Prostate gland (tissue), 2 donors: ENCODE measurements at regions of chr4 and their contacts with region 1.

Region 1: DNA sequence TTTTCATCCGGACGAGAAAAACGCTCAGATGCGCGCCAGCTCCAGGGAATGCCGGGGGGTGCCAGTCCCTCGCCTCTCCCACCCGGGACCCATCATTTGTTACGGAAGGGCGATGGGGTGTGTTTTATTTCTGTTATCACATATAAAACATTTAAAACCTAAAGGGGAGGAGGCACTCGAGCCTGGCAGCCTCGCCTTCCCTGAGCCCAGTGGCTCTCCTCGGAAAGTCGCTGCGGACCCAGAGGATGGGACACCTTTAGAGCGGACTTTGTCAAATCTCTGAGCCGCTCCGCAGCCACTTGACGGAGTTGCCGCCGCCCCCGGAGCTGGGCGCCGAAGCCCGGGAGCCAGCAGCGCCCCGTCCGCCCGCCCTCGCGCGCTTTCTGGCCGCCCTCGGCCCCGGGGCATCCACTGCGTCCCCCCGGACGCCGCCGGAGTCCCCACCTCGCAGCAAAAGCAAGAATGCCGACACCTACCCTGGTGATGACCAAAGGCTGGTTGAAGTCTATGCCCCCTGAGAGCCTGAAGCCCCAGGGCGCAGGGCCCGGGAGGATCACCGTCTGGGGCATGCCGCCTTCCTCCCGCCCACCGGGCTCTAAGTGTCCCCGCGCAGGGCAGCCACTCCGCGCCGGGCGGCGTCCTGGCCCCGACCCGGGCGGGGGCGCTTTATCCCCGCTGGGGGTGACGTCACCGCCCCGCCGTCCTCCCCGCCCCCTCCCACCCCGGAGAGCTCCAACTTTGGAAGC is at the start of gene PDLIM3:
- DNase-seq: no peak
- H3K4me3 ChIP-seq: peak within 1 kb of the TSS; percentile 57 to 80
- H3K27ac ChIP-seq: peak within 1 kb of the TSS; percentile 81 to 88
- H3K4me1 ChIP-seq: no peaks in the 10 kb centered on the region
- H3K27me3 ChIP-seq: no peaks in the 10 kb centered on the region
- CTCF ChIP-seq: no peak
- POLR2A ChIP-seq: peak; percentile 51
- total RNA-seq, gene PDLIM3: 78.7 to 139 TPM

Region 2: DNA sequence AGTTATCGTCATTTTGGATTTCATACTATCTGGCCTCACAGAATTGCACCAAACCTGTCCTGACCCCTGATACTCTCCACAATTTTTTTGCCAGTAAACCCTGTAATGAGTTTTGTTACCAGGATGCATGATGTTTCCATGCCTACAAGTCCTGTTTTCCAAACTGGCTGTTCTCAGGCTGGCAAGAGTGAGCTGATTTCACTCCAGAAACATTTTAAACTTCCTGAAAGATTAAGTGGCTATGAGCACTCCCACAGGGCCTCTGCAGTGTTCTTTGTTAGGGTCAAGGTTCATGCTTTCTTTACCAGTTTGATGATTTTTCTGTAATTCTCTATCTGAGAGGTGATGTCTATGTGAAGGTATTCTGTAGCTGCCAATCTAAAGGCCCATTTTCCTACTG is 31.9 kb after region 1 on chr4:
- intact Hi-C with region 1: loop called (anchors 5 kb)
- DNase-seq: peak; percentile 15
- H3K4me3 ChIP-seq: no peak overlapping the region
- H3K27ac ChIP-seq: peak overlapping the region; percentile 67 to 71
- H3K4me1 ChIP-seq: peaks cover 9% of the 10 kb centered on the region
- H3K27me3 ChIP-seq: no peaks in the 10 kb centered on the region
- CTCF ChIP-seq: no peak
- POLR2A ChIP-seq: no peak